ENCODE measurements at regions of chr7 and their contacts with region 1.

Region 1: GRCh38 chr7:103296901-103297836 is at the start of gene PMPCB:
- DNase-seq: peak; percentile 95 to 100 (median 98)
- H3K4me3 ChIP-seq: peak within 1 kb of the TSS; percentile 71 to 100 (median 93)
- H3K27ac ChIP-seq: peak within 1 kb of the TSS in 56 of 59 donors; percentile 46 to 93 (median 84)
- H3K27me3 ChIP-seq: no peaks in the 10 kb centered on the region
- CTCF ChIP-seq: peak; percentile 93 to 100 (median 99)
- total RNA-seq, gene PMPCB: 42.8 to 87.8 (median 68.7) TPM

Region 2: DNA sequence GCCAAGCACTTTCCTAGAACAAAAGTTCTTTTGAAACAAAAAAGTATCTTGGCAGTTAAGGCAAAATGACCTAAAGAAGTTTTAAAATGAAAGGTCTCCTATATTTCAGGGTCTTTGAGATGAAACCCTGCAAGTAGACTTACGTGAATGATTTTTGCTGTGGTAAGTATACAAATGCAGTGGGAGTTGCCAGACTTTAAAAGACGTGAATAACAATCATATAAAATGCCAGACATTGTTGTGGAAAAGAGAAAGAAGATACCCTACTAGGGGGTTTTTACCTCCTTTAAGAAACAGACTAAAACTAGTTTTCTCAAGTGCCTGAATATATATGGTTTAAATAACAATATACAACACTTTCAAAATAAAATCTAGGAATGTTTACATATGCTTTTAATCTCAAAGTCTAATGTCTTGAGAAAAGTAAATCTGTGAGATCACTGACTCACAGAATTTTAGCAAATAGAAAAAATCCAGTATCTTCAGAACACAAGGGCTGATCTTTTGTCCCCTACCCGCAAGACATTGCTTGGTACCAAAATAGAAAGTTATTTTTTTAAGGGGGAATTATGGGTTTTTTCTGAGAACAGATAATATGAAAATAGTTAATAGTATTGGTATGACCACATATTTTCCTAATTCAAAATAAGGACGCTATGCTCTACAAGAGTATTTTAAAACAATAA is 354.8 kb before region 1 on chr7:
- intact Hi-C with region 1: no loop called
- DNase-seq: no peak
- H3K4me3 ChIP-seq: no peak overlapping the region
- H3K27ac ChIP-seq: no peak overlapping the region
- H3K27me3 ChIP-seq: no peaks in the 10 kb centered on the region
- CTCF ChIP-seq: no peak

Region 3: GRCh38 chr7:103074519-103075336 is 222.4 kb before region 1 on chr7 and contains the starts of genes ARMC10 and FBXL13:
- intact Hi-C with region 1: loop called in 1 of 2 experiments (anchors 10 kb)
- DNase-seq: peak; percentile 76 to 93 (median 88)
- H3K4me3 ChIP-seq: peak within 1 kb of the TSS; percentile 66 to 96 (median 84)
- H3K27ac ChIP-seq: peak within 1 kb of the TSS in 58 of 59 donors; percentile 26 to 96 (median 88)
- H3K27me3 ChIP-seq: no peaks in the 10 kb centered on the region
- CTCF ChIP-seq: peak in 43 of 56 donors; percentile 6 to 69 (median 40)
- total RNA-seq, gene ARMC10: 28.5 to 62.6 (median 44.0) TPM
- total RNA-seq, gene FBXL13: 2.0 to 10.4 (median 5.2) TPM

Region 4: DNA sequence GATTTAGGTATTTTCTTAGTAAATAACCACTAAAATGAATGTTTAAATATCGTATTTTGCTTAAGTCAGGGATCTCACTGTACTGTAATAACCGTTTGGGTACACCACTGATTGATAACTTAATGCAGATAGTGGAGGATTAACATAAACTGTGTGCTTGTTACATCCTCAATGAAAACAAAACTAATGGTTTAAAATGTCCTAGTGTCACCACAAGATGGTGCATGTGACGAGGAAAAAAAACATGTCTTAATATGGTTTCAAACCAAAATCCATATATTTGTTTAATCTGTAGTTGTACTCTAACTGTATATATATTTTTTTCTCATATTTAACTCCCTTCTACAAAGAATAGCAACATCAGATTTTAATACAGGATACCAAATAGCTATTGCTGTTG is 203.1 kb before region 1 on chr7:
- intact Hi-C with region 1: loop called in 1 of 2 experiments (anchors 5 kb)
- DNase-seq: no peak
- H3K4me3 ChIP-seq: no peak overlapping the region
- H3K27ac ChIP-seq: peak overlapping the region in 49 of 59 donors; percentile 4 to 78 (median 57)
- H3K27me3 ChIP-seq: no peaks in the 10 kb centered on the region
- CTCF ChIP-seq: peak in 54 of 56 donors; percentile 26 to 78 (median 56)

Region 5: GRCh38 chr7:103127006-103127405 is 170.2 kb before region 1 on chr7:
- intact Hi-C with region 1: no loop called
- DNase-seq: no peak
- H3K4me3 ChIP-seq: peak overlapping the region in 12 of 59 donors; percentile 2 to 35 (median 18)
- H3K27ac ChIP-seq: peak overlapping the region; percentile 53 to 98 (median 90)
- H3K27me3 ChIP-seq: no peaks in the 10 kb centered on the region
- CTCF ChIP-seq: peak in 2 of 56 donors; percentile 8 to 13

Region 6: DNA sequence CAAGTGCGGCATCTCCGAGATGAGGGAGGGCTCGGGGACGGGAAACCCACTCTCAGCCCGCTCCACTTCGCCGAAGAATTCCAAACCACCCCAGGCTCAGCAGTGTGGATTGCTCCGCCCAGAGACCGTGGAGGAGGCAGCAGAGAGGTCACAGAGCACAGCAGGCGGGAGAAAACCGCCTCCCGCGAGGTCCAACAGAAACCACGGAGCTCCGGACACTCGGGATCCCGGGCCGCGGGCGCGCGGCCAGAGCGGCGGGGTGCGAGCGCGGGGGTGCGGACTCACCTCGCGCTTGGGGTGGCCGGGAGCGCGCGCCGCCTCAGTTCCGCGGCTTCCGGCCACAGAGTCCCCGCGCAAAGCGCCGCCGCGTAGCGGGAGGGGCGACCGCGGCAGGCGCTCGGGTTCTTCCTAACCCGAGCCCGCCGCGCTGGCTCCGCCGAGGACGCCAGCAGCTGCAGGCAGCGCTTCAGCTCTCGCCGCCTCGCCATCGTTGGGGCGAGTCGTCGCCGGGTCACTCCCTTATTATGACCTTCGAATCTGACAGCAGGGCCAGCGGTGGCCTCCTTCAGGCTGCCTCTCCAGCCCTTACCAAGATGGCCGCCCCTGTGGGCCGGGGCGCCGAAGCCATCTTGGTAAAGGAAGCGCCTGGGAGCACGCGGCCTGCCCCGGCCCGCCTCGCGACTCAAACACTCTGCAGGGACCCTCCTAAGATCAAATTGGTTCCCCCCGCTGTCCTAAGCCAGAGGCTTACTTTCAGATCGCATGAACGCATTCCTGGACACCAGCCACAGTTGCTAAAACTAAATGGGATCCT is 148.0 kb before region 1 on chr7 and contains the start of gene NAPEPLD:
- intact Hi-C with region 1: loop called in 1 of 2 experiments (anchors 5 kb)
- DNase-seq: peak; percentile 80 to 93 (median 90)
- H3K4me3 ChIP-seq: peak within 1 kb of the TSS; percentile 52 to 96 (median 81)
- H3K27ac ChIP-seq: peak within 1 kb of the TSS; percentile 96 to 100 (median 99)
- H3K27me3 ChIP-seq: no peaks in the 10 kb centered on the region
- CTCF ChIP-seq: peak in 32 of 56 donors; percentile 3 to 55 (median 31)
- total RNA-seq, gene NAPEPLD: 63.0 to 129 (median 90.9) TPM

Region 7: GRCh38 chr7:103344453-103345149 is 47.4 kb after region 1 on chr7 and contains the start of gene DNAJC2:
- intact Hi-C with region 1: loop called (anchors 2 to 5 kb)
- DNase-seq: peak; percentile 65 to 93 (median 85)
- H3K4me3 ChIP-seq: peak within 1 kb of the TSS; percentile 69 to 99 (median 92)
- H3K27ac ChIP-seq: peak within 1 kb of the TSS in 57 of 59 donors; percentile 13 to 93 (median 76)
- H3K27me3 ChIP-seq: no peaks in the 10 kb centered on the region
- CTCF ChIP-seq: peak in 32 of 56 donors; percentile 8 to 53 (median 29)
- total RNA-seq, gene DNAJC2: 12.1 to 30.8 (median 19.6) TPM

Region 8: DNA sequence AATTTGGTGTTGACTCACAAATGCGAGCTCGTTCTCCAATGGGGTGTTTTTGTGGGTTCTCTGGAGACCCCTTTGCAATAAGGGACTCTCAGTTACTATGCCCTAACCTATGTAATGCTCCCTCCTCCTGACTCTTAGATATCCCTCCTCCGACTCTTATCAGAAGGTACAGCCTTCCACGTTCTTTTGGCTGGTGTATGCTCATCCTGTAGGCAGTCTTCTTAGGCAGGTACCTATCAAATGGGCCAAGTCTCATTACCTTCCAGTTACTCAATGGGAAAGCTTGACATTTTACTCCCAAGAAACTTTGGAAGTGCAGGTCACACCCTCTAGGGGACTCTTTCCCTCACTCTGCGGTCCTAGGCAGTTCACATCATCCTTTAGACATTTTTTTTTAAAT is 116.2 kb after region 1 on chr7:
- intact Hi-C with region 1: loop called in 1 of 2 experiments (anchors 5 kb)
- DNase-seq: no peak
- H3K4me3 ChIP-seq: no peak overlapping the region
- H3K27ac ChIP-seq: no peak overlapping the region
- H3K27me3 ChIP-seq: no peaks in the 10 kb centered on the region
- CTCF ChIP-seq: no peak

Region 9: GRCh38 chr7:103524042-103524907 is 227.1 kb after region 1 on chr7:
- intact Hi-C with region 1: loop called in 1 of 2 experiments (anchors 10 kb)
- DNase-seq: peak in 7 of 10 donors; percentile 35 to 61 (median 45)
- H3K4me3 ChIP-seq: peak overlapping the region in 45 of 59 donors; percentile 1 to 55 (median 28)
- H3K27ac ChIP-seq: peak overlapping the region in 56 of 59 donors; percentile 7 to 85 (median 68)
- H3K27me3 ChIP-seq: no peaks in the 10 kb centered on the region
- CTCF ChIP-seq: peak; percentile 13 to 90 (median 69)

Measured in dorsolateral prefrontal cortex (tissue), 120 donors.